Heart right ventricle (tissue), 16 donors: ENCODE measurements at regions of chr20 and their contacts with region 1.

Region 1: DNA sequence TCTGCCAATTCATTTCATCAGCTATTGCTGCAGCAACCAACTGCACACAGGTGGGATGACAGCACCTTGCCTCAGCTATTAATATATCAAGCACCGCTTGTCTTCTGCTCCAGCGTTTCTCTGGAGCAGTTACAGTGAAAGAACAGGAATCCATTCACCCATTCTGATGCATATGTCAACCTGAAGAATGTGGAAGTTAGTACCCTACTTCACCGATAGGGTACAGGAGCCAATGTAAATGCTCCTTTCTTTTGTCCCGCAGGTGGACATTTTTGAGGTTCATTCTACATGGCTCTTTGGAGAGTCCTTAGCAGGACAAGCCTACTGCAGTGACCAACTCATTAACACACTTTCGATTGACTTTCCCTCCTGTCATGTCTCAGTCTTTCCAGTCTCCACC is 139.9 kb upstream of the PRND start:
- DNase-seq: no peak
- ATAC-seq: no peak
- H3K4me3 ChIP-seq: no peak overlapping the region
- H3K27ac ChIP-seq: no peak overlapping the region
- H3K4me1 ChIP-seq: no peaks in the 10 kb centered on the region
- H3K27me3 ChIP-seq: peaks cover 0 to 36% (median 13%) of the 10 kb centered on the region in 7 donors
- CTCF ChIP-seq: no peak

Region 2: GRCh38 chr20:4130404-4131189 is 451.2 kb before region 1 on chr20:
- intact Hi-C with region 1: loop called in 1 of 10 experiments (anchors 5 kb)
- DNase-seq: no peak
- ATAC-seq: no peak
- H3K4me3 ChIP-seq: no peak overlapping the region
- H3K27ac ChIP-seq: no peak overlapping the region
- H3K4me1 ChIP-seq: peaks cover 0 to 35% (median 0%) of the 10 kb centered on the region in 9 donors
- H3K27me3 ChIP-seq: peaks cover 0 to 7% (median 5%) of the 10 kb centered on the region in 7 donors
- CTCF ChIP-seq: no peak

Region 3: GRCh38 chr20:4244700-4245485 is 336.9 kb before region 1 on chr20:
- intact Hi-C with region 1: loop called in 1 of 10 experiments (anchors 5 kb)
- DNase-seq: peak in 1 of 2 donors; percentile 28
- ATAC-seq: no peak
- H3K4me3 ChIP-seq: no peak overlapping the region
- H3K27ac ChIP-seq: no peak overlapping the region
- H3K4me1 ChIP-seq: peaks cover 0 to 12% (median 8%) of the 10 kb centered on the region in 9 donors
- H3K27me3 ChIP-seq: peaks cover 5 to 79% (median 54%) of the 10 kb centered on the region in 7 donors
- CTCF ChIP-seq: no peak